ENCODE measurements at regions of chr1 and their contacts with region 1.

Region 1: DNA sequence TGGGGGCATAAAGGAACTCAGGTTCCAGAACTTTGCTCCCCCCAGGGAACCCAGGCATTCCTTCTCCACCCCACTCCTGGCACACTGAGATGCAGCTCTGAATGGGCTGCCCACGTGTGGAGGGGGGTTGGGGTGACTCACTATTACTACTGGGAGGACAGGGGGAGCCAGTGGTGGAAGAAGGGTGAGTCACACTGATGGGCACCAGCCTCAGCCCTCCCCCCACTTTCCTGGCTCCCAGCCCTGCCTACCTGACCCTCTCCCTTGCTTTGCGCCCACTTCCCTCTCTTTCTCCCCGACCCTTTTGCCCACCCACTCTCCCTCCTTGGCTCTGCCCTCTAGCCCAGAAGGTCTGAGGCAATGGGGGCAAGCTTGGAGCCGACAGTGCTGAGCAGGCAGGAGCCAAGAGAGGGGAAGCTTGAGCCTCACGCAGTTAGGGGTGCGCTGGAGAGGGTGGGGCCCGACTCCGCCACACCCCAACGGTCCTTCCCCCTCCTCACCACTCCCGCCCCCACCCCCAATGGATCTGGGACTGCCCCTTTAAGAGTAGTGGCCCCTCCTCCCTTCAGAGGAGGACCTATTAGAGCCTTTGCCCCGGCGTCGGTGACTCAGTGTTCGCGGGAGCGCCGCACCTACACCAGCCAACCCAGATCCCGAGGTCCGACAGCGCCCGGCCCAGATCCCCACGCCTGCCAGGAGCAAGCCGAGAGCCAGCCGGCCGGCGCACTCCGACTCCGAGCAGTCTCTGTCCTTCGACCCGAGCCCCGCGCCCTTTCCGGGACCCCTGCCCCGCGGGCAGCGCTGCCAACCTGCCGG is at the start of gene LMNA:
- DNase-seq: peak; percentile 97
- H3K4me3 ChIP-seq: peak within 1 kb of the TSS; percentile 72 to 99 (median 97)
- H3K27ac ChIP-seq: peak within 1 kb of the TSS; percentile 94
- H3K4me1 ChIP-seq: peaks cover 33% of the 10 kb centered on the region
- H3K27me3 ChIP-seq: no peaks in the 10 kb centered on the region
- CTCF ChIP-seq: no peak
- total RNA-seq, gene LMNA: 389 to 797 TPM

Region 2: DNA sequence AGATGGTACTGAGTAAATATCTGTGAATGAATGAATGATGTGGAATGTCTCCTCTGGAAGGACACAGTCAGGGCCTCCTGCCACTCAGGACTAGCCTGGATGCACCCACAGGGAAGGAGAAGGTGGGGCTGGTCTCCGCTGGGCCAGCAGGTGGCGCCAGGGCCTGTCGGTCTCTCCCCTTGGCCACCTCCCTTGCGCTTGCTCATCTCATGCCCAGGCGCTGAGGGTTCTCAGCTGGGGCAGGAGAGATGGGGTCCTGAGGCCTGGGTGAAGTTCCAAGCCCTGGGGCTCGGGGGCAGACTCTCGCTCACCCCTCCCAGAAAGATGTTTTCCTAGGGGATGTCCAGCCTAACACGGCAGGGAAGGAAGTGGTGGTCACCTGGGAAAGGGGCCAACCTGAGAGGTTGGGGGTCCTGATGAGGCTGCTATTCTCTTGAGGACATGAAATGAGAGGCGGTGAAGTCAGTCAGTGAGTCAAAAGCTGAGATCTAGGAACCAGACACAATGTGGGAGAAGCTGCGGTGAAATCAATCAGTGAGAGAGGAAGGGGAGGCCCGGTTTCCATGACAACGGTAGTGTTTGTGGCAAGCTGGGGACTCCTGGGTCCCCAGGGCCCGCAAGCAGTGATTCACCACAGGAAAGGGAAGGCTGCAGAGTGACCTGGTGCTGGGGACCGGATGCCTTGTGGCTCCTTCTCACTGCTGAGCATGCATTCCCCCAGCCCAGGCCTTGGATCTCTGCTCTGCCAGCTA is 17.5 kb before region 1 on chr1:
- CTCF ChIA-PET with region 1: no interaction called
- dilution Hi-C with region 1: no loop called
- in situ Hi-C with region 1: no loop called
- intact Hi-C with region 1: loop called (anchors 1 kb)
- DNase-seq: peak; percentile 77
- H3K4me3 ChIP-seq: no peak overlapping the region
- H3K27ac ChIP-seq: peak overlapping the region; percentile 49
- H3K4me1 ChIP-seq: peaks cover 33% of the 10 kb centered on the region
- H3K27me3 ChIP-seq: no peaks in the 10 kb centered on the region
- CTCF ChIP-seq: peak; percentile 96 to 100

Region 3: GRCh38 chr1:156104065-156104810 is 10.1 kb before region 1 on chr1:
- CTCF ChIA-PET with region 1: no interaction called
- dilution Hi-C with region 1: no loop called
- in situ Hi-C with region 1: no loop called
- intact Hi-C with region 1: loop called (anchors 1 kb)
- DNase-seq: peak; percentile 90
- H3K4me3 ChIP-seq: peak overlapping the region in 1 of 3 experiments; percentile 2
- H3K27ac ChIP-seq: peak overlapping the region; percentile 91
- H3K4me1 ChIP-seq: peaks cover 48% of the 10 kb centered on the region
- H3K27me3 ChIP-seq: no peaks in the 10 kb centered on the region
- CTCF ChIP-seq: no peak